Activated CD8-positive, alpha-beta T cell treated with anti-CD3 and anti-CD28 coated beads, Interleukin-2, amount 10 ng/mL, durations not matched to agents 7 days and 5 days (primary cell): ENCODE measurements at regions of chr15 and their contacts with region 1.

Region 1: GRCh38 chr15:56428821-56429458 is 36.0 kb downstream of the MNS1 start:
- DNase-seq: no peak
- ATAC-seq: no peak
- H3K4me3 Mint-ChIP-seq: no peak overlapping the region
- H3K27ac Mint-ChIP-seq: no peak overlapping the region
- H3K4me1 Mint-ChIP-seq: peaks cover 5% of the 10 kb centered on the region
- H3K27me3 Mint-ChIP-seq: no peaks in the 10 kb centered on the region

Region 2: GRCh38 chr15:56245871-56246814 is 182.8 kb before region 1 on chr15:
- CTCF ChIA-PET with region 1: interaction called, 22 read pairs
- POLR2A ChIA-PET with region 1: interaction called, 3 read pairs
- DNase-seq: peak; percentile 91
- ATAC-seq: peak; percentile 74
- H3K4me3 Mint-ChIP-seq: peak overlapping the region; percentile 88
- H3K27ac Mint-ChIP-seq: peak overlapping the region; percentile 92
- H3K4me1 Mint-ChIP-seq: peaks cover 28% of the 10 kb centered on the region
- H3K27me3 Mint-ChIP-seq: no peaks in the 10 kb centered on the region

Region 3: DNA sequence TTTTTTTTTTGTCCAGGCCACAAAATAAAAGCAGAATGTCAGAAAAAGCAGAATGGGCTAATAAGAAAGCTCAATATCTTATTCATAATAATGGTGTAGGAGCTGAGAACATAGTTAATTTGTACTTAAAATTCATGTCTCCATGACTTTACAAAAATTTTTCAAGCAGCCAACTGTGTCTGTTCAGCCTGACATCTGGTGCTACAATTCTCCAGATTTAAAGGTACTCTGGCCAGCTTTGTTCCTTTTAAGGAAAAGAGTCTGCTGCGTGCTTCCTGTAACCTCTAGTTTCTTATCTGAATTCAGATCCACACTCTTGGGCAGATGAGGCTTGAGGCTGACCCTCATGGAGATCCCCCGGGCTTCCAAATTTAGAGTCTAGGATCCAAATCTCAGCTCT is 176.6 kb before region 1 on chr15:
- CTCF ChIA-PET with region 1: interaction called, 21 read pairs
- POLR2A ChIA-PET with region 1: interaction called, 3 read pairs
- DNase-seq: no peak
- ATAC-seq: no peak
- H3K4me3 Mint-ChIP-seq: no peak overlapping the region
- H3K27ac Mint-ChIP-seq: no peak overlapping the region
- H3K4me1 Mint-ChIP-seq: no peaks in the 10 kb centered on the region
- H3K27me3 Mint-ChIP-seq: peaks cover 29% of the 10 kb centered on the region

Region 4: GRCh38 chr15:56356616-56357015 is 72.3 kb before region 1 on chr15:
- CTCF ChIA-PET with region 1: no interaction called
- POLR2A ChIA-PET with region 1: no interaction called
- DNase-seq: no peak
- ATAC-seq: no peak
- H3K4me3 Mint-ChIP-seq: no peak overlapping the region
- H3K27ac Mint-ChIP-seq: no peak overlapping the region
- H3K4me1 Mint-ChIP-seq: no peaks in the 10 kb centered on the region
- H3K27me3 Mint-ChIP-seq: peaks cover 19% of the 10 kb centered on the region

Region 5: GRCh38 chr15:56484287-56484686 is 55.3 kb after region 1 on chr15:
- CTCF ChIA-PET with region 1: no interaction called
- POLR2A ChIA-PET with region 1: no interaction called
- DNase-seq: no peak
- ATAC-seq: no peak
- H3K4me3 Mint-ChIP-seq: no peak overlapping the region
- H3K27ac Mint-ChIP-seq: no peak overlapping the region
- H3K4me1 Mint-ChIP-seq: no peaks in the 10 kb centered on the region
- H3K27me3 Mint-ChIP-seq: peaks cover 10% of the 10 kb centered on the region